Activated naive CD4-positive, alpha-beta T cell treated with anti-CD3 and anti-CD28 coated beads for 36 hours (primary cell): ENCODE measurements at regions of chr22 and their contacts with region 1.

Region 1: DNA sequence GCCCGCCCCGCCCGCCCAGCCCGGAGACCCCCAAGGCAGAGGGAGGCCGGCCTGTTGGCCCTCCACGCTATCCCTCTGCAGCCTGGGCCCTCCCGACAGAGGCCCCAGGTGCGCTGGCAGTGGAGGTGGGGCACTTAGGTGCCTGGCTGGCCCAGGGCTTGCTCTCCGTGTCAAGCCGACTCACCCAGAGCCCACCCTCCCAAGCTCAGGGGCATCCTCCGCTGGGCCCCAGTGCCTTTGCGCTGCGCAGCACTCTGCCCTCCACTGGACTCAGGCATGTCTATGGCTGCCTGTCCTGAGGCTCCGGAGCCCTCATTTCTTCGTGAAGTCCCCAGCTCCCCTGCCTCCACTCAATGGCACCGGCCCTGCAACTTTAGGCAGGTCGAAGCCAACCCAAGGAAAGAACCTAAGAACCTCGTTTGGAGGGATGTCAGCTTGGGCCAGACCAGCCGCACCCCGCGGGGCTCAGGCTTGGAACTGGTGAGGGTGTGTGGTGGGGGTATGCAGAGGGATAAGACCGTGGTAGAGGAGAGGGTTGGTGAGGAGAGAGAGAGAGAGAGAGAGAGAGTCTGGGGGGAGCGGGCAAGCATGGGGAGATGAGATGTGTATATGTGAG is 6.1 kb downstream of the SMIM45 start:
- DNase-seq: no peak
- H3K4me3 Mint-ChIP-seq: no peak overlapping the region
- H3K27ac Mint-ChIP-seq: no peak overlapping the region
- H3K4me1 Mint-ChIP-seq: peaks cover 4% of the 10 kb centered on the region
- H3K27me3 Mint-ChIP-seq: no peaks in the 10 kb centered on the region

Region 2: GRCh38 chr22:41822317-41823060 is 135.6 kb before region 1 on chr22:
- CTCF ChIA-PET with region 1: interaction called, 6 read pairs
- intact Hi-C with region 1: loop called (anchors 1 kb)
- DNase-seq: peak; percentile 65
- H3K4me3 Mint-ChIP-seq: no peak overlapping the region
- H3K27ac Mint-ChIP-seq: peak overlapping the region; percentile 81
- H3K4me1 Mint-ChIP-seq: peaks cover 33% of the 10 kb centered on the region
- H3K27me3 Mint-ChIP-seq: no peaks in the 10 kb centered on the region

Region 3: GRCh38 chr22:41857155-41857859 is 100.7 kb before region 1 on chr22:
- CTCF ChIA-PET with region 1: no interaction called
- intact Hi-C with region 1: no loop called
- DNase-seq: peak; percentile 93
- H3K4me3 Mint-ChIP-seq: peak overlapping the region; percentile 11
- H3K27ac Mint-ChIP-seq: peak overlapping the region; percentile 95
- H3K4me1 Mint-ChIP-seq: peaks cover 77% of the 10 kb centered on the region
- H3K27me3 Mint-ChIP-seq: no peaks in the 10 kb centered on the region

Region 4: DNA sequence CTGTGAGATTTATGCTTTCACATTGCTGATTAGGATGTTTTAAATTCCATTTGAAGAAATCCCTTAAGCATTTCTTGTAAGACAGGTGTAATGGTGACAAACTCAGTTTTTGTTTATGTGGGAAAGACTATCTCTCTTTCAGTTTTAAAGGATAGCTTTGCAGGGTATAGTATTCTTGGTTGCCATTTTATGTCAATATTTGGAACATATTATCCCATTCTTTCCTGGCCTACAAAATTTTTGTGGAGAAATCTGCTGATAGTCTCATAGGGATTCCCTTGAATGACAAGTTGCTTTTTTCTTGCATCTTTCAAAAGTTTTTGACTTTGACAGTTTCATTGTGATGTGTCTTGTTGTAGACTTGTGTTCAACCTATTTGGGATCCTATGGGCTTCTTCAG is 83.7 kb after region 1 on chr22:
- CTCF ChIA-PET with region 1: no interaction called
- intact Hi-C with region 1: no loop called
- DNase-seq: no peak
- H3K4me3 Mint-ChIP-seq: no peak overlapping the region
- H3K27ac Mint-ChIP-seq: no peak overlapping the region
- H3K4me1 Mint-ChIP-seq: no peaks in the 10 kb centered on the region
- H3K27me3 Mint-ChIP-seq: no peaks in the 10 kb centered on the region